Dorsolateral prefrontal cortex (tissue), 120 donors: ENCODE measurements at regions of chr1 and their contacts with region 1.

Region 1: GRCh38 chr1:175023043-175023921 is at the start of gene MRPS14:
- DNase-seq: peak; percentile 89 to 98 (median 96)
- H3K4me3 ChIP-seq: peak within 1 kb of the TSS; percentile 72 to 100 (median 88)
- H3K27ac ChIP-seq: peak within 1 kb of the TSS; percentile 43 to 95 (median 89)
- H3K27me3 ChIP-seq: no peaks in the 10 kb centered on the region
- CTCF ChIP-seq: peak in 33 of 56 donors; percentile 9 to 58 (median 30)
- total RNA-seq, gene MRPS14: 23.2 to 47.2 (median 33.2) TPM

Region 2: DNA sequence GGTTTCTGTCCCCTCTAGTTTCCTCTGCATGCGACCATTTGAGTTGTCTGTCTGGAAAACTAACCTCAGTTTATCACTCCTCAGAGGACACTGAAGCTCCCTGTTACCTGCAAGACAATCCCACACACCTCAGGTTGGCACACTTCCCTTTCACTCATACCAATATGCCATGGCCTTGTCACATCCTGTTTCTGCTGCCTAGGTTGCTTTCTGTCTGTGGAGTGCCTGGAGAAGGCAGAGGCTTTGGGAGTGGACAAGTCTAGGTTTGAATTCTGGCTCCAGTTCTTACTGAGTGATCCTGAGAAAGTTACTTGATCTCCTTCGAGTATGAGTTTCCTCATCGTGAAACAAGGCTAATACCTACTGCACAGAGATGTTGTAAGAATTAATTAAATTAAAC is 195.0 kb before region 1 on chr1:
- intact Hi-C with region 1: no loop called
- DNase-seq: no peak
- H3K4me3 ChIP-seq: no peak overlapping the region
- H3K27ac ChIP-seq: no peak overlapping the region
- H3K27me3 ChIP-seq: no peaks in the 10 kb centered on the region
- CTCF ChIP-seq: no peak

Region 3: GRCh38 chr1:174982971-174983689 is 40.2 kb before region 1 on chr1:
- intact Hi-C with region 1: no loop called
- DNase-seq: peak in 1 of 10 donors; percentile 46
- H3K4me3 ChIP-seq: no peak overlapping the region
- H3K27ac ChIP-seq: peak overlapping the region in 15 of 59 donors; percentile 1 to 70 (median 22)
- H3K27me3 ChIP-seq: no peaks in the 10 kb centered on the region
- CTCF ChIP-seq: peak; percentile 67 to 89 (median 80)

Region 4: GRCh38 chr1:175319418-175320230 is 296.3 kb after region 1 on chr1:
- intact Hi-C with region 1: loop called (anchors 2 to 5 kb)
- DNase-seq: peak in 9 of 10 donors; percentile 33 to 74 (median 63)
- H3K4me3 ChIP-seq: no peak overlapping the region
- H3K27ac ChIP-seq: peak overlapping the region in 1 of 59 donors; percentile 30
- H3K27me3 ChIP-seq: peaks cover 0 to 4% (median 0%) of the 10 kb centered on the region in 45 donors
- CTCF ChIP-seq: peak; percentile 65 to 93 (median 85)